Activated naive CD4-positive, alpha-beta T cell treated with anti-CD3 and anti-CD28 coated beads, Interleukin-2, amount 10 ng/mL, durations not matched to agents 7 days and 5 days (primary cell): ENCODE measurements at regions of chr19 and their contacts with region 1.

Region 1: GRCh38 chr19:43446746-43447489 is 18.5 kb downstream of the LYPD3 start:
- DNase-seq: peak; percentile 84
- H3K4me3 Mint-ChIP-seq: no peak overlapping the region
- H3K27ac Mint-ChIP-seq: no peak overlapping the region
- H3K4me1 Mint-ChIP-seq: peaks cover 45% of the 10 kb centered on the region
- H3K27me3 Mint-ChIP-seq: peaks cover 4% of the 10 kb centered on the region

Region 2: DNA sequence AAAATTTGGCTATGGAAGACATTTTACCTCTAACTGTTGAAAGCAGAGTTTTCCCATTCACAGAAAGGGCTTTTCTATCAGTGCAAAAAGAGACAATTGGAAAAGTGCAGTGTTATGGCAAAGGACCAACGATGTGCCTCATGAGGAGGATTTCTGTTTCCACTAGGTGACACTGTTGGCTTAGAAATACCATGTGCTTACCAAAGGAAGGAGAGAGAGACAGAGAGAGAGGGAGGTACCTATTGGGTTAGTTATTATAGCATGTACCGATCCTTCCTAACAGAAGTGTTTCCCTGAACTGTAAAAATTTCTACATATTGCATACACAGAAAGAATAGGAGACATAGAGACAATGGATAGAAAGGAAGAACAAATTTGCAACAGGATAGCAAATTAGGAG is 217.6 kb before region 1 on chr19:
- CTCF ChIA-PET with region 1: no interaction called
- DNase-seq: no peak
- H3K4me3 Mint-ChIP-seq: no peak overlapping the region
- H3K27ac Mint-ChIP-seq: no peak overlapping the region
- H3K4me1 Mint-ChIP-seq: no peaks in the 10 kb centered on the region
- H3K27me3 Mint-ChIP-seq: no peaks in the 10 kb centered on the region

Region 3: DNA sequence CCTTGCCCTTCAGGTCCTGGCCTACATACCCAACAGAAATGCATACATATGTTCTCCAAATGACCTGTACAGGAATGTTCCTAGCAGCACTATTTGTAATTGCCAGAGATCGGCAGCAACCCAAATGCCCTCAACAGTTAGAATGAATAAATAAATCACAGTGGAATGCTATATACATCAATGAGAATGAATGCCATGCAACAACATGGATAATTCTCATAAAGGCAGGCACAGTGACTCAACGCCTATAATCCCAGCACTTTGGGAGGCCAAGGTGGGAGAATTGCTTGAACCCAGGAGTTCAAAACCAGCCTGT is 13.6 kb before region 1 on chr19:
- CTCF ChIA-PET with region 1: interaction called, 40 read pairs
- DNase-seq: no peak
- H3K4me3 Mint-ChIP-seq: no peak overlapping the region
- H3K27ac Mint-ChIP-seq: no peak overlapping the region
- H3K4me1 Mint-ChIP-seq: peaks cover 50% of the 10 kb centered on the region
- H3K27me3 Mint-ChIP-seq: peaks cover 3% of the 10 kb centered on the region

Region 4: DNA sequence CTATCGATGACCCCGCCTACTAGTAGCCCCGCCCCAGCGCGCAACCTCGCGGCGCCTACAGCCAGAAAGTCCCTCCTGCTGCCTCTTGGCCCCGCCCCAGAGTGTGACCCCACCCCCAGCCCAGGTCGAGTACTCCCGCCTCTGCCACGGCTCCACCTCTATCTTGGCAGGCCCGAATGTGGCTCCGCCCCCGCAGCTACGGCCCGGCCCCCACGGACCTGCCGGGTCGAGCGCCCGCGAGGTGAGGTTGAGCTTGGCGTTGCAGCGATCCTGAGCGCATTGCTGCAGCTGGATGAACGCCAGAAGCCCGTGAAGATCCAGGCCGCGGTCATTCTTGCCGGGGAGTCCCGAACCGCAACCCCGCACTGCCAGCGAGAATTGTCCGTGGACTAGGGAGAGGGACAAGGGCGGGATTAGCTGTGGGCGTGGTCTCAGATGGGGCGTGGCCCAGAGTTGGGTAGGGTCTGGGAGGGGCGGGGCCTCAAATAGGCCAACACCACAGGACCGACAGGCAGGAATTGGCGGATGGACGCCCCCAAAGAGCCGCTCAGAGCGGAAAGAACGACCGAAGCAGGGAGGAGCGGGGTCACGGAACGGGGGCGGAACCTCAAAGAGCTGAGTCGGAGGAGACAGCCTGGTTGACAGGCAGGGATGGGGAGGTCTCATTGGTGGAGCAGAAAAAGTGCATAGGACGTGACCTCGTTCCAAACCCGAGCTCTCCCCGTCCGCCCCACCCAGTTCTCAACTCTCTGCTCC is 16.6 kb after region 1 on chr19:
- CTCF ChIA-PET with region 1: interaction called, 58 read pairs
- DNase-seq: peak; percentile 100
- H3K4me3 Mint-ChIP-seq: peak overlapping the region; percentile 79
- H3K27ac Mint-ChIP-seq: peak overlapping the region; percentile 98
- H3K4me1 Mint-ChIP-seq: peaks cover 42% of the 10 kb centered on the region
- H3K27me3 Mint-ChIP-seq: peaks cover 19% of the 10 kb centered on the region

Region 5: GRCh38 chr19:43503501-43504425 is 56.8 kb after region 1 on chr19:
- CTCF ChIA-PET with region 1: interaction called, 17 read pairs
- DNase-seq: peak; percentile 100
- H3K4me3 Mint-ChIP-seq: peak overlapping the region; percentile 83
- H3K27ac Mint-ChIP-seq: peak overlapping the region; percentile 89
- H3K4me1 Mint-ChIP-seq: peaks cover 42% of the 10 kb centered on the region
- H3K27me3 Mint-ChIP-seq: no peaks in the 10 kb centered on the region

Region 6: DNA sequence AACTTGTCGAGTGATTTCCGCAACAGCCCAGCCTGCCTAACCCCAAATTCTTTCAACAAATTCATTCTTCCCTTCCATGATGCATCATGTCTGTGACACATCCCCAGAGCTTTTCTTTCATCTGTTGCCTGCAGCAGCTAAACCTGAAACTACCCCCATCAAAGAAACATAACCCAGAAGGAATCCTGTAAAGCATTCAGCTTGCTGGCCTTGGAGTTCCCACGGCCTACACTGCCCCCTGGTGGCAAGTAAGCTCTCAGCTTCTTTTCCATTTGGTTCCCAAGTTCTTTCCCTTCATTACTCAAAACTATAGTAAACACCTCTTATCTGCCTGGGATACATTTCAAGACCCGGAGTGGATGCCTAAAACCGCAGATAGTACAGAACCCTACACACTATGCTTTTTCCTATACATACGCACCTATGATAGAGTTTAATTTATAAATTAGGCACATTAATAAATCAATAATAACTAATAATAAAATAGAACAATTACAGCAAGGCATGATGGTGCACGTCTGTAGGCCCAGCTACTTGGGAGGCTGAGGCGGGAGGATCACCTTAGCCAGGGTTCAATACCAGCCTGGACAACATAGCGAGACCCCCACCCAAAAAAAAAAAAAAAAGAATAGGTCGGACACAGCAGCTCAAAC is 72.6 kb after region 1 on chr19:
- CTCF ChIA-PET with region 1: interaction called, 194 read pairs
- DNase-seq: peak; percentile 86
- H3K4me3 Mint-ChIP-seq: no peak overlapping the region
- H3K27ac Mint-ChIP-seq: peak overlapping the region; percentile 62
- H3K4me1 Mint-ChIP-seq: peaks cover 18% of the 10 kb centered on the region
- H3K27me3 Mint-ChIP-seq: no peaks in the 10 kb centered on the region

Region 7: DNA sequence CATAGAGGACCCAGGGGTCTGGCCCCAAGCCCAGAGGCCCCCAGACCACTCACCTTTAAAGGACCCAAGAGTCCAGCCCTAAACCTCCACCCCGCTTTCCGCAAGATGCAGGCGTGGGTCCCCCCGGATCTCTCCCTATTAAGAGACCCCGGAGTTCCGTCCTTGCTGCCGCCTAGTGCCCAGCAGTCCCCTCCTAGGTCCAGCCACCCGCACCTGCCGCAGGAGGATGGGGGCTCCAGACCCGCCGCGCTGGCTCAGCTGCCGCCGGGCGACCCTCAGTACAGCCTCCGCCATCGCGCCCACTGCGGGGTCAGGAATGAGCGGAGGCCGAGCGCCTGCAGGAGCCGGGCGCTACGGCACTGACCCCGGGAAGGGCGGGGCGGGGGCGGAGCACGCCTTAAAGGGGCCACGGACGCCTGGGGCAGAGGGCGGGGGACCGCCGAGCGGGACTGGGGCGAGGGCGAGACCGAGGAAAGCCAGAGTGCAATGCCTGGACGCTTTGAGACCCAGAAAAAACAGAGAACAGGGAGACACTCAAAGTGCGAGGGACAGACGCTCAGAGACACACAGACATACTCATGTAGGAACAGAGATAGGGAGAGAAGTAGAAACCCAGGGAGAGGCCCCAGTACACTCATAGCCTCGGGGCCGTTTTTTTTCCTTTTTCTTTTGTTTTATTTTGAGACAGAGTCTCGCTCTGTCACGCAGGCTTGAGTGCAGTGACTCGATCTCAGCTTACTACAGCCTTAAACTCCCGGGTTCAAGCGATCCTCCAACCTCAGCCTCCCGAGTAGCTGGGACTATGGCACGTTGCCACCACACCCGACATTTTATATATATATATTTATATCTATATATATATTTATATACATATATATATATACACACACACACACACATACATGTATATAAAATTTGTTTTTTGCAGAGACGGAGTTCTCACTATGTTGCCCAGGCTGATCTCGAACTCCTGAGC is 80.3 kb after region 1 on chr19 and contains the start of gene ETHE1:
- CTCF ChIA-PET with region 1: interaction called, 194 read pairs
- DNase-seq: peak; percentile 90
- H3K4me3 Mint-ChIP-seq: peak within 1 kb of the TSS; percentile 96
- H3K27ac Mint-ChIP-seq: peak within 1 kb of the TSS; percentile 89
- H3K4me1 Mint-ChIP-seq: peaks cover 34% of the 10 kb centered on the region
- H3K27me3 Mint-ChIP-seq: no peaks in the 10 kb centered on the region

Region 8: GRCh38 chr19:43555185-43555770 is 108.4 kb after region 1 on chr19:
- CTCF ChIA-PET with region 1: interaction called, 16 read pairs
- DNase-seq: peak; percentile 91
- H3K4me3 Mint-ChIP-seq: no peak overlapping the region
- H3K27ac Mint-ChIP-seq: no peak overlapping the region
- H3K4me1 Mint-ChIP-seq: peaks cover 9% of the 10 kb centered on the region
- H3K27me3 Mint-ChIP-seq: no peaks in the 10 kb centered on the region

Region 9: GRCh38 chr19:43634872-43635560 is 188.1 kb after region 1 on chr19:
- CTCF ChIA-PET with region 1: no interaction called
- DNase-seq: no peak
- H3K4me3 Mint-ChIP-seq: no peak overlapping the region
- H3K27ac Mint-ChIP-seq: peak overlapping the region; percentile 56
- H3K4me1 Mint-ChIP-seq: peaks cover 11% of the 10 kb centered on the region
- H3K27me3 Mint-ChIP-seq: peaks cover 77% of the 10 kb centered on the region